Heart left ventricle (tissue), 16 donors: ENCODE measurements at regions of chr5 and their contacts with region 1.

Region 1: GRCh38 chr5:168268949-168269943 is 22.2 kb upstream of the WWC1 start:
- DNase-seq: peak; percentile 75 to 89 (median 83)
- ATAC-seq: peak; percentile 84 to 88 (median 86)
- H3K4me3 ChIP-seq: peak overlapping the region in 10 of 12 donors; percentile 26 to 50 (median 42)
- H3K27ac ChIP-seq: no peak overlapping the region
- H3K4me1 ChIP-seq: peaks cover 0 to 17% (median 13%) of the 10 kb centered on the region in 12 donors
- H3K27me3 ChIP-seq: peaks cover 0 to 6% (median 0%) of the 10 kb centered on the region in 9 donors
- CTCF ChIP-seq: peak; percentile 66 to 97 (median 86)
- POLR2A ChIP-seq: no peak

Region 2: DNA sequence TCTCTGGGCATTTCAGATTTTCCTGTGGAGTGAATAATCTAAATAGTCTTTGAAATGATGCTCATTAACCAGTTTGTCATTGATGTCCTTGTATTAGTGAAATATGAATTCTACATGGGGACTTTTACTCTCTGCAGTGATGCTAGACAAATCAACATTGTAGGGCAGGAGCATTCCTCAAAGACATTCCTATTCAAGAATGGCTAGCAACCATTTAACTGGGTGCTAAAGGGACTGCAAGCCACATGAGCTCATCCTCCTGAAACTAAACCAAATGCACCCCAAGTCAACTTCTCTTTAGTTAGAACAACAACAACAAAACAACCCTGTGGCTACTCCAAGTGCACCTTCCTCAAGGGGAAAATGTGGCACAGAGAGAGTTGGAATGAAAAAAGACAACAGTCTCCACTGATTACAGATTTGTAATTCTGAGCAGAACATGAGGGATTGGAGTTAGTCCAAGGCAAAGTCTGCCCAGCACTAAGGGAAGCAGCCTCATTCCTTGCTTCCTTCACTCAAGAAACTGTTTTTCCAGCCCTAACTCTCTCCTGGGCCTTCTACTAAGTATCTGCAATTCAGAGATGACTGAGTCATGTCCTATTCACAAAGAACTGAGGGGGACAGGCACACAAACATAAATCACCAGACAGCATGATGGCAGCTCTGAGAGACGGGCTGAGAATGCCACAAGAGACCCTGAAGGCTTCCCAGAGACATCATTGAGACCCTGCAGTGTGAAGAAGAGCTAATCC is 59.8 kb before region 1 on chr5:
- intact Hi-C with region 1: no loop called
- DNase-seq: no peak
- ATAC-seq: peak in 3 of 4 donors; percentile 23 to 57 (median 36)
- H3K4me3 ChIP-seq: no peak overlapping the region
- H3K27ac ChIP-seq: peak overlapping the region in 6 of 12 donors; percentile 9 to 50 (median 40)
- H3K4me1 ChIP-seq: peaks cover 0 to 22% (median 4%) of the 10 kb centered on the region in 12 donors
- H3K27me3 ChIP-seq: no peaks in the 10 kb centered on the region
- CTCF ChIP-seq: no peak
- POLR2A ChIP-seq: no peak

Region 3: GRCh38 chr5:168372356-168372946 is 103.2 kb after region 1 on chr5:
- intact Hi-C with region 1: no loop called
- DNase-seq: no peak
- ATAC-seq: no peak
- H3K4me3 ChIP-seq: no peak overlapping the region
- H3K27ac ChIP-seq: no peak overlapping the region
- H3K4me1 ChIP-seq: no peaks in the 10 kb centered on the region
- H3K27me3 ChIP-seq: peaks cover 0 to 3% (median 0%) of the 10 kb centered on the region in 9 donors
- CTCF ChIP-seq: no peak
- POLR2A ChIP-seq: no peak

Region 4: DNA sequence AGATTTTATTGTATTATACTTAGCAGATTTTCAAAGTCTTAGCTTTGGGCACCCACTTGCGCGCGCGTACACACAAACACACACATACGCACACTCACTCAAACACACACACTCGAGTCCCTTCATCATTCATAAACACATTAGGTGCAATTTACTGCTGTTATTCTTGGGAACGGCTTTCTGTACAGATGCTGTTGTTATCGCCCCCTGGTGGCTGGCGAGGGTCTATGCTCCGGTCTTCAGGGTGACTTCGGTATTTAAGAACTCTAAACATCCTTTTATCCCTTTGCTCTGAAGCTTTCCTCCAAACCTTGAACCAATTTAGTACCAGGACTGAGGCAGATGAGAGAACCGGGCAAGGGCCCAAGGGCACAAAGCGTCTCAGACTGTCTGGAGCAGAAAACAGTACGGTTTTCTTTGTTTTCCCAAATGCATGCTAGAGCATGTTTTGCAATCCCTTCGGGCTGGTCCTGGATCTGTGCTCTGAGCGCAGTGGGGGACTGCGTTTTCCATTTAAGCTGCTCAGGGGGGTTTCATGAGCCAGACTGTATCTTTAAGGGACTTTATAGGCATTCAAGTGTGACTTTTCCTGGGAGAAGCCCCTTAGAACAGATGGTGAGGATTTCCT is 1033.4 kb after region 1 on chr5:
- intact Hi-C with region 1: loop called in 1 of 10 experiments (anchors 10 kb)
- DNase-seq: peak; percentile 58 to 76 (median 65)
- ATAC-seq: peak in 3 of 4 donors; percentile 30 to 62 (median 53)
- H3K4me3 ChIP-seq: no peak overlapping the region
- H3K27ac ChIP-seq: no peak overlapping the region
- H3K4me1 ChIP-seq: peaks cover 0 to 34% (median 7%) of the 10 kb centered on the region in 12 donors
- H3K27me3 ChIP-seq: peaks cover 0 to 48% (median 24%) of the 10 kb centered on the region in 9 donors
- CTCF ChIP-seq: peak; percentile 77 to 92 (median 88)
- POLR2A ChIP-seq: no peak